ENCODE measurements at regions of chrX and their contacts with region 1.

Region 1: GRCh38 chrX:119791438-119792231 is at the start of gene RPL39:
- DNase-seq: peak; percentile 88
- ATAC-seq: peak; percentile 93
- H3K4me3 Mint-ChIP-seq: peak within 1 kb of the TSS; percentile 91
- H3K27ac Mint-ChIP-seq: peak within 1 kb of the TSS; percentile 96
- H3K4me1 Mint-ChIP-seq: peaks cover 23% of the 10 kb centered on the region
- H3K27me3 Mint-ChIP-seq: no peaks in the 10 kb centered on the region
- CTCF ChIP-seq: no peak
- total RNA-seq, gene RPL39: 2,778 to 2,808 TPM

Region 2: DNA sequence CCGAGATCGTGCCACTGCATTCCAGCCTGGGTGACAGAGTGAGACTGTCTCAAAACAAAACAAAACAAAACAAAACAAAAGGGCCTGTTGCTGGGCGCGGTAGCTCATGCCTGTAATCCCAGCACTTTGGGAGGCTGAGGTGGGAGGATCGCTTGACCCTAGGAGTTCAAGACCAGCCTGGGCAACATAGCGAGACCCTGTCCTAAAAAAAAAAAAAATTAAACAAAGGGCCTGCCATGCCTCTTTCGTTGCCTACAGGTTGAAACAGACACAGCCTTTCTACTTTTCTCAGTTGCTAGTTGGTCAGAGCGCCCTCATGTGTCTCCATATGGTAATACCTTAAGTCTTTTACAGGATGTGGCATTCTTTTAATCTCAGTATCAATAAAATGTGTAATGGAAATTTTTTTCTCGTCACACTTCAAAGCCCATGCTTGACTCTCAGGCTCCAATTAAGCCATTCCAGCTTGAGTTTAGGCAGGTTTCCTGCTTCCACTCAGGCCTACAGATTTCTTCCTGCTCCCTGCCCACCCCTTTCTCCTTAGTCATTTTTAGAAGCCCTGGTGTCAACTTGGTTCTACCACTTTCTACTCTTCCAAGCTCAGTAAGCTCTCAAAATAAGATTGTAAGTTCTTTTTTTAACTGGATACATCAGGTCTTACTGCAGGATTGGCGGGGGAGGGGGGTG is 37.9 kb before region 1 on chrX:
- CTCF ChIA-PET with region 1: interaction called, 3 read pairs
- POLR2A ChIA-PET with region 1: interaction called, 18 read pairs
- intact Hi-C with region 1: no loop called
- DNase-seq: peak; percentile 69
- ATAC-seq: peak; percentile 62
- H3K4me3 Mint-ChIP-seq: no peak overlapping the region
- H3K27ac Mint-ChIP-seq: peak overlapping the region; percentile 94
- H3K4me1 Mint-ChIP-seq: peaks cover 51% of the 10 kb centered on the region
- H3K27me3 Mint-ChIP-seq: no peaks in the 10 kb centered on the region
- CTCF ChIP-seq: peak; percentile 62

Region 3: GRCh38 chrX:119871599-119872395 is 80.2 kb after region 1 on chrX and contains the starts of genes NDUFA1 and RNF113A:
- CTCF ChIA-PET with region 1: interaction called, 7 read pairs
- POLR2A ChIA-PET with region 1: interaction called, 24 read pairs
- intact Hi-C with region 1: loop called (anchors 2 kb)
- DNase-seq: peak; percentile 87
- ATAC-seq: peak; percentile 94
- H3K4me3 Mint-ChIP-seq: peak within 1 kb of the TSS; percentile 95
- H3K27ac Mint-ChIP-seq: peak within 1 kb of the TSS; percentile 98
- H3K4me1 Mint-ChIP-seq: peaks cover 11% of the 10 kb centered on the region
- H3K27me3 Mint-ChIP-seq: no peaks in the 10 kb centered on the region
- CTCF ChIP-seq: no peak
- total RNA-seq, gene NDUFA1: 85.5 to 90.6 TPM
- total RNA-seq, gene RNF113A: 32.3 to 33.2 TPM